ENCODE measurements at regions of chr1 and their contacts with region 1.

Region 1: GRCh38 chr1:226332947-226333346 is 24.0 kb upstream of the LIN9 start:
- DNase-seq: peak; percentile 21
- H3K4me3 Mint-ChIP-seq: peak overlapping the region; percentile 3
- H3K27ac Mint-ChIP-seq: no peak overlapping the region
- H3K4me1 Mint-ChIP-seq: peaks cover 20% of the 10 kb centered on the region
- H3K27me3 Mint-ChIP-seq: no peaks in the 10 kb centered on the region

Region 2: GRCh38 chr1:226201029-226201593 is 131.8 kb before region 1 on chr1:
- CTCF ChIA-PET with region 1: interaction called, 25 read pairs
- POLR2A ChIA-PET with region 1: no interaction called
- DNase-seq: no peak
- H3K4me3 Mint-ChIP-seq: no peak overlapping the region
- H3K27ac Mint-ChIP-seq: no peak overlapping the region
- H3K4me1 Mint-ChIP-seq: peaks cover 3% of the 10 kb centered on the region
- H3K27me3 Mint-ChIP-seq: peaks cover 12% of the 10 kb centered on the region

Region 3: DNA sequence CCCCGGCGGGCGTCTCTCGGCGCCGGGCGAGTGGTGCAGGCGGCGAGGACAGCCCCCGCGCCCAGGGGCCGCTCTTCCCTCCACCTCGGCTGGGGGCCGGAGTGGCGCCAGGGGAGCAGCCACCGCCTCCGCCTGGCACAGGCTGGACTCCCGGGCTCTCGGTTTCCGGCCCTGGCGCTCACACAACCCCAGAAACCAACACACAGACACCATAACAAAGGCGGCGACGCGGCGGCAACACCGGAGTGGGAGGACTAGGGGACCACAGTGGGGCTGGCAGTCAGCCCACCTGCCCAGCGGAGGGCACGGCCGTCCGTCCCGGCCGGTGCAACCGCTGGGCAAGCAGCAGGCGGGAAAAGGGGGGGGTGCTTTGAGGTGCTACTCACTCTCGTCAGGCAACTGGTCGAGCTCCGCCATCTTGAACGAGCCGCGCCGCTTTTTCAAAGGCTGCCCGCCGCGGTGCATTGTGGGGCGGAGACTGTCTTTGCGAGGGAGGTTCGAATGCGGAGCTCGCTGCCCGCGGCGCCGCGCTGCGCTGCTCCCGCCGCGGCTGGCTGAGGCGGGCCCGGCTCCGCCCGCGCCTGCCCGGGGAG is 24.1 kb before region 1 on chr1 and contains the start of gene LIN9:
- CTCF ChIA-PET with region 1: interaction called, 41 read pairs
- POLR2A ChIA-PET with region 1: interaction called, 22 read pairs
- DNase-seq: peak; percentile 94
- H3K4me3 Mint-ChIP-seq: peak within 1 kb of the TSS; percentile 89
- H3K27ac Mint-ChIP-seq: peak within 1 kb of the TSS; percentile 87
- H3K4me1 Mint-ChIP-seq: peaks cover 32% of the 10 kb centered on the region
- H3K27me3 Mint-ChIP-seq: peaks cover 13% of the 10 kb centered on the region
- total RNA-seq, gene LIN9: 10.4 to 11.5 TPM